ENCODE measurements at regions of chr7 and their contacts with region 1.

Region 1: GRCh38 chr7:130961128-130961601 is 227.2 kb upstream of the KLF14 start:
- DNase-seq: peak; percentile 93
- H3K4me3 Mint-ChIP-seq: peak overlapping the region; percentile 84
- H3K27ac Mint-ChIP-seq: no peak overlapping the region
- H3K4me1 Mint-ChIP-seq: peaks cover 43% of the 10 kb centered on the region
- H3K27me3 Mint-ChIP-seq: peaks cover 6% of the 10 kb centered on the region

Region 2: DNA sequence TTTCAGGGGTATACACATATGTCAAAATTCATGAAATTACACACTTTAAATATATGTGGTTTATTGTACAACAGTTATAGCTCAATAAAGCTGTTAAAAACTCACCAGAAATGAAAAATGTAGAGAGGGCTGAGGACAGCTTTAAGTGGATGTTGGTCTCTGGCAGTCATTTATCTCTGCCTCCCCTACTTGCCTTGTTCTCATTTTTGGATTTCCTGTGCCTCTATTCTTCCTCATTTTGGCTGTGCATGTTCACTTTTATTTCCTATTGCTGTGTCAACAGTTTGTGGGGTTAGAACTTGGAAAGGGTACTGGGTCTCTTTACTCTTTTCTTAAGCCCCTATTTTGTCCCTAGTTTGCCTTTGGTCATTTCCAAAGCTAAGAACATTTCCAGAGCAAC is 487.9 kb before region 1 on chr7:
- CTCF ChIA-PET with region 1: no interaction called
- POLR2A ChIA-PET with region 1: no interaction called
- intact Hi-C with region 1: no loop called
- DNase-seq: no peak
- H3K4me3 Mint-ChIP-seq: no peak overlapping the region
- H3K27ac Mint-ChIP-seq: no peak overlapping the region
- H3K4me1 Mint-ChIP-seq: no peaks in the 10 kb centered on the region
- H3K27me3 Mint-ChIP-seq: peaks cover 6% of the 10 kb centered on the region

Region 3: DNA sequence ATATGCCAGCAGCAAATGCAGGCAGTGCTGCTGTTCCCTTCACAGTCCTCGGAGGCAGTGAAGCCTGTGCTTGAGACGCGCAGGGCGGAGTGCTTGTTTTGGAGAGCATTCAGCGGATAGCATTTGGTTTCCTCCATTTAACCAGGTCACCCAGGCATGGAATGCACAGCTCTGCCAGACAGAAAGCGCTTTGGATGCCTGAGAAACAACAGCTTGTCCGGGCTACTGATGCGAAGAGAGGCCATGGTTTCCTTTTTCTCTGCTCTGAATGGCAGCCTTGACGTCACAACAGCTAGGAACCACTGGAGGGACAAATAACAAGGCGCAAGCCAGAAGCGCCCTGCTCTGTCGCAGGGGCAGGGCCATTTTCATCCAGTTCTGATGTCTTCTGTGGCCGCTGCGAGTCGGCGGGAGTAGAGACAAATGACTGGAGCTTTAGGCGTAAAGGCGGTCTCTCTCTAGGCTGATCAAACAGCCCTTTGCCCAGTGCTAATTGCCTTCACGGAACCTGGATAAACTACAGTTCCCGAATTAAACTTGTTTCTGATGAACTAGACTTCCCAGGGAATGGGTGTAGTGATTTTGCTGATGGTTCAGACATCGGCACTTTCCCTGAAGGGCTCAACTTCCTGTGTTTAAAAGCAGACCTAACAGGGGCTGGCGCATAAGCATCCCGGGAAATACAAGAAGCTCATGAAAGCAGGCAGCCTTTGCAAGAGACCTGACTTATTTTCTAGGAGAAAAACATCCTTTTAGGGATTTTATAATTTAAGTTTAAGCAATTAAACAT is 39.6 kb before region 1 on chr7:
- CTCF ChIA-PET with region 1: no interaction called
- POLR2A ChIA-PET with region 1: no interaction called
- intact Hi-C with region 1: no loop called
- DNase-seq: no peak
- H3K4me3 Mint-ChIP-seq: no peak overlapping the region
- H3K27ac Mint-ChIP-seq: peak overlapping the region; percentile 92
- H3K4me1 Mint-ChIP-seq: peaks cover 97% of the 10 kb centered on the region
- H3K27me3 Mint-ChIP-seq: no peaks in the 10 kb centered on the region

Region 4: DNA sequence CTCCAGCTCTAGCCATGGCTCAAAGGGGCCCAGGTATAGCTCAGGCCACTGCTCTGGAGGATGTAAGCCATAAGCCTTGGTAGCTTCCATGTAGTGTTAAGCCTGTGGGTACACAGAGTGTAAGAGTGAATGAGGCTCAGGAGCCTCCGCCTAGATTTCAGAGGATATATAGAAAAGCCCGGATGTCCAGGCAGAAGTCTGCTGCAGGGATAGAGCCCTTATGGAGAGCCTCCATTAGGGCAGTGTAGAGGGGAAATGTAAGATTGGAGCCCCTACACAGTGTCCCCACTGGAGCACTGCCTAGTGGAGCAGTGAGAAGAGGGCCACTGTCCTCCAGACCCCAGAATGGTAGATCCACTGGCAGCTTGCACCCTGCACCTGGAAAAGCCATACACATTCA is 13.6 kb after region 1 on chr7:
- CTCF ChIA-PET with region 1: interaction called, 26 read pairs
- POLR2A ChIA-PET with region 1: interaction called, 314 read pairs
- intact Hi-C with region 1: loop called (anchors 1 kb)
- DNase-seq: no peak
- H3K4me3 Mint-ChIP-seq: peak overlapping the region; percentile 55
- H3K27ac Mint-ChIP-seq: peak overlapping the region; percentile 94
- H3K4me1 Mint-ChIP-seq: peaks cover 85% of the 10 kb centered on the region
- H3K27me3 Mint-ChIP-seq: no peaks in the 10 kb centered on the region

Region 5: DNA sequence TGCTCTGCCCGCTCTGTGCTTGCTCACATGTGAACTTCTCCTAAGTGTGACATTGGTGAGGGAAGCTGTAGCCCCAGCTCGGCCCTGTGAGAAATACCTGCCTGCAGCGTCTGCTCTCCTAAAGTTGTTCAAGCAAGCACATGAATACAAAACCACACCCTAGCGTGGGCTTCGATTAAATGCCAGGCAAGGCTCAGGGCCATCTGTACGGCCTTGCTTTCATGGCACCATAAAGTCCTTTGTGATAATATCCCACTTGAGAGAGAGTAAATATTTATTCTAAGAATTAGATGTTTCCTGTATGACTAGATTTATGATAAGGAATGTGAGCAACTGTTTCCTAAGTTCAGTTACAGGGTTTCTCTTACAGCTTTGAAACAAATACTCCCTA is 35.7 kb after region 1 on chr7:
- CTCF ChIA-PET with region 1: interaction called, 4 read pairs
- POLR2A ChIA-PET with region 1: interaction called, 115 read pairs
- intact Hi-C with region 1: no loop called
- DNase-seq: peak; percentile 73
- H3K4me3 Mint-ChIP-seq: peak overlapping the region; percentile 55
- H3K27ac Mint-ChIP-seq: peak overlapping the region; percentile 94
- H3K4me1 Mint-ChIP-seq: peaks cover 90% of the 10 kb centered on the region
- H3K27me3 Mint-ChIP-seq: no peaks in the 10 kb centered on the region

Region 6: DNA sequence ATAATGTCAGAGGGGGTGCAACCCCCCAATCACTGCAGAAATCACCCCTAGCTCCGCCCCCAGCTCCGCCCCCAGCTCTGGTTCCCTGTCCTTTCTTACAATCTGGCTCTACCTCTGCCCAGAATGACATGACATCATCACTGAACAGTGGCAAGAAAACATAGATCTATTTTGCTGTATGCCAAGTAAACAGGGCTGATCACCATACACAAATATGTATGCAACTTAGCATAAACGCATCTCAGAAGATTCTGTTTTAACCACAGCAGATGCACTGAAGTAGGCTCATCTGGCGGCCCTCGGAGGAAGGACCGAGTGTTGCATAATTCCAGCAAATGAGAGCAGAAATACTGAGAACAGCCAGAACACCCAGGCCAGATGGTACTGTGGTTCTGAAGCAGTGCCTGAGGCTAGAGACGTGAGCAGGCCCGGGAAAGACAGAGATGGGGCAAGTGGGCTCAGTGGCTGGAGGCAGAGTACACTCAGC is 66.2 kb after region 1 on chr7:
- CTCF ChIA-PET with region 1: interaction called, 3 read pairs
- POLR2A ChIA-PET with region 1: interaction called, 49 read pairs
- intact Hi-C with region 1: loop called (anchors 1 kb)
- DNase-seq: peak; percentile 66
- H3K4me3 Mint-ChIP-seq: peak overlapping the region; percentile 36
- H3K27ac Mint-ChIP-seq: peak overlapping the region; percentile 79
- H3K4me1 Mint-ChIP-seq: peaks cover 87% of the 10 kb centered on the region
- H3K27me3 Mint-ChIP-seq: no peaks in the 10 kb centered on the region

Region 7: DNA sequence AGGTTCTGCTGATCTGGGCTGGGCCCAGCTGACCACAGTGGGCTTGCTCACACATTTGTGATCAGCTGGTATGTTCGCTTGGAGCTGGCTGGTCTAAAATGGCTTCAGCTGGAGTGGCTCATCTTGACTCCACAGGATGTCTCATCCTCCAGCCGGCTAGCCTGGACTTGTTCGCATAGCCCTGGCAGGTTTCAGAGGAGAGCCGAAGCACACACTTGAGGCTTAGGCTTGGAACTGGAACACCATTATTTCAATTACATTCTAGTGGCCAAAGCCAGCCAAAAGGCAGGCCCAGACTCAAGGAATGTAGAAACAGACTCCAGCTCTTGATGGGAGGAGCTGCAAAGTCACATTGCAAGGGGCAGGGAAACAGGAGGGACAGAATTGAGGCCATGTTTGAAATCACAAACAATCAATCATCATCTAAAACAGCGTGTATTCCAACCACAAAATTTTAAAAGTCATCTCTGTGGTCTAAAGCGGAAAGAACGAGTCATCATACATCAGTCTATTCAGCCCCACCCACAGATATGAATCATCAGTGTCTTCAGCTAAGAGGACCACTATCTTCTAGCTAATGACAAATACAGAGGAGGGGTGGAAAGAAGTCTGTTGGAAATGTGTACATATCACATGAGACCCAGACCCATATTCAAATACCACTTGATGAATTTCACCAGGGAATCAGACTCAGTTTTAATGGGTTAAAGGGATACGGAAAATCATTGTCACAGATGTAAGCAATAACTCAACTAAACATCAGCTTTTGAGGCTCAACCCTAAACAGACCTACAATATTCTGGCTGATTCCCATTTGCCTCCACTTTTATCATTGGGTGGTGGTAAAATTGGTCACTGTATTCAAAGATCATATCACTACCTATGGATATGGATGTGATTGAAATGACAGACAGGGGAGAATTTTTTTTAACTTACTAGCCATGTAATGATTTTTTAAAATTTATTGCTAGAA is 227.5 kb after region 1 on chr7:
- CTCF ChIA-PET with region 1: no interaction called
- POLR2A ChIA-PET with region 1: no interaction called
- intact Hi-C with region 1: loop called (anchors 10 kb)
- DNase-seq: peak; percentile 68
- H3K4me3 Mint-ChIP-seq: peak overlapping the region; percentile 45
- H3K27ac Mint-ChIP-seq: peak overlapping the region; percentile 90
- H3K4me1 Mint-ChIP-seq: peaks cover 54% of the 10 kb centered on the region
- H3K27me3 Mint-ChIP-seq: no peaks in the 10 kb centered on the region

Region 8: DNA sequence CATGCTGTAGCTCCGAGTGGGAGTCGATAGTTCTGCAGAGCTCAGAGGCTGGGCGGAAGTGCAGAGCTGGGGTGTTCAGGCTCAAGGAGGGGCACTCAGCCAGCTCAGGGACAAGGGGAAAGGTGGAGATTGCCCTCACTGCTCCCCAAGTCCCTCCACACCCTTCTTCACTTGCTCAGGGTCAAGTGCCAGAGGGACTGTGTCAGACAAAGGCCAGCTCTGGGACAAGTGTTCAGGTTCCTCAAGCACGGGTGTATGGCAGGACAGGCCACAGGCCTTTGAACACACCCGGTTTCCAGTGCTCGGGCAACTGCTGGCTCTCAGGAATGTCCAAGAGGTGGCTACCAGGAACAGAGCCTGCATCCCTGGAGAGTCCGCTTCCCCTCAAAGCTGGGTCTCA is 888.3 kb after region 1 on chr7:
- CTCF ChIA-PET with region 1: no interaction called
- POLR2A ChIA-PET with region 1: no interaction called
- intact Hi-C with region 1: no loop called
- DNase-seq: no peak
- H3K4me3 Mint-ChIP-seq: no peak overlapping the region
- H3K27ac Mint-ChIP-seq: no peak overlapping the region
- H3K4me1 Mint-ChIP-seq: no peaks in the 10 kb centered on the region
- H3K27me3 Mint-ChIP-seq: peaks cover 5% of the 10 kb centered on the region